Panc1 (cell line): ENCODE measurements at regions of chr2 and their contacts with region 1.

Region 1: DNA sequence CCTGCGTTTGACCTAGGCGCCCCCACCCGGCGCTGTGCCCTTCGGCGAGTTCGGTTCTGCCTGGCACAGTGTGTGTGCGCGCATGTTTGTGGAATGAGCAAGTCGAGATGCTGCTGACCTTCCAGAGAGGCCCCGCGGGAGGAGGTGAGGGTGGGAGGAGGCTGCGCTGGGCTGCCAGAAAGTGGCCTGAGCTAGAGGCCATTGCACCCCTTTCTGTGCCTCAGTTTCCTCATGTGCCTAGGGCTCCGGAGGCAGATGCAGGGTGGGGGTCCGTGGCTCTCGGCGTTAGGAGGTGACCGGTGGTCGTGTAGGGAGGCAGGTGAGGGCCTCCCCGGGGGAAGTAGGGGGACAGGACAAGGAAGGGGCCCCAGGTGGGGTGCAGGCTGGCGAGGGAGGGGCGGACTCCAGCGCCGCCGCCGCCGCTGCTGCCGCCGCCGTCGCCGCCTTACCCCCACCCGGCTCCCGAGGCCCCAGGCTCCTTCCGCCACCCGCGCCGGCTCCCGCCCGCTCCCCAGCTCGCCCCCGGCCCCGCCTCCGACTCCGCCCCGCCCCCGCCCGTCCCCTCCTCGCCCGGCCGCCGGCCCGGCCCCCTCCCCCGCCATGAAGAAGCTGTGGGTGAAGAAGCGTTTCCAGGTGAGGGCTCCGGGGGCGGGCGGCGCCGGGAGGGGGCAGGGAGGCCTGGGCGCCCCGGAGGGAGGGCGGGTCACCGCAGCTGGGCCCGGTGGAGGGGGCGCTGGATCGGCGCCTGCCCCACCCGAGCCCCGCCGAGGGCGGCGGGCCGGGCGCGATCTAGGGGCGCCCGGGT is 7.0 kb downstream of the SPEG start:
- DNase-seq: no peak
- ATAC-seq: peak; percentile 52
- H3K4me3 ChIP-seq: peak overlapping the region; percentile 28 to 37; a peak in 3 of 4 replicates
- H3K27ac ChIP-seq: no peak overlapping the region
- H3K4me1 ChIP-seq: peaks cover 9% of the 10 kb centered on the region
- H3K27me3 ChIP-seq: peaks cover 8% of the 10 kb centered on the region
- CTCF ChIP-seq: no peak

Region 2: GRCh38 chr2:219245148-219245898 is 196.3 kb before region 1 on chr2 and contains the starts of genes GLB1L and STK16:
- CTCF ChIA-PET with region 1: no interaction called
- POLR2A ChIA-PET with region 1: no interaction called
- in situ Hi-C with region 1: no loop called
- intact Hi-C with region 1: no loop called
- DNase-seq: peak; percentile 62
- ATAC-seq: peak; percentile 95
- H3K4me3 ChIP-seq: peak within 1 kb of the TSS; percentile 84 to 94
- H3K27ac ChIP-seq: peak within 1 kb of the TSS; percentile 81
- H3K4me1 ChIP-seq: peaks cover 39% of the 10 kb centered on the region
- H3K27me3 ChIP-seq: no peaks in the 10 kb centered on the region
- CTCF ChIP-seq: no peak
- total RNA-seq, gene GLB1L: 8.1 TPM
- total RNA-seq, gene STK16: 29.9 TPM

Region 3: GRCh38 chr2:219665926-219666325 is 224.3 kb after region 1 on chr2:
- CTCF ChIA-PET with region 1: no interaction called
- POLR2A ChIA-PET with region 1: interaction called, 18 read pairs
- in situ Hi-C with region 1: no loop called
- intact Hi-C with region 1: no loop called
- DNase-seq: no peak
- ATAC-seq: no peak
- H3K4me3 ChIP-seq: no peak overlapping the region
- H3K27ac ChIP-seq: no peak overlapping the region
- H3K4me1 ChIP-seq: no peaks in the 10 kb centered on the region
- H3K27me3 ChIP-seq: peaks cover 2% of the 10 kb centered on the region; the same call in 1 of the 2 replicates
- CTCF ChIP-seq: no peak